Activated B cell treated with CpG ODN at 0.5 μM for 24 hours (primary cell): ENCODE measurements at regions of chr5 and their contacts with region 1.

Region 1: GRCh38 chr5:97547999-97548738 is 365.1 kb upstream of the RIOK2 start:
- DNase-seq: no peak
- ATAC-seq: peak; percentile 25
- H3K4me3 Mint-ChIP-seq: no peak overlapping the region
- H3K27ac Mint-ChIP-seq: no peak overlapping the region
- H3K4me1 Mint-ChIP-seq: peaks cover 5% of the 10 kb centered on the region
- H3K27me3 Mint-ChIP-seq: no peaks in the 10 kb centered on the region
- CTCF ChIP-seq: no peak

Region 2: GRCh38 chr5:97452646-97453045 is 95.5 kb before region 1 on chr5:
- CTCF ChIA-PET with region 1: no interaction called
- POLR2A ChIA-PET with region 1: no interaction called
- intact Hi-C with region 1: no loop called
- DNase-seq: no peak
- ATAC-seq: no peak
- H3K4me3 Mint-ChIP-seq: no peak overlapping the region
- H3K27ac Mint-ChIP-seq: no peak overlapping the region
- H3K4me1 Mint-ChIP-seq: no peaks in the 10 kb centered on the region
- H3K27me3 Mint-ChIP-seq: no peaks in the 10 kb centered on the region
- CTCF ChIP-seq: no peak

Region 3: GRCh38 chr5:98796197-98796972 is 1248.2 kb after region 1 on chr5:
- CTCF ChIA-PET with region 1: no interaction called
- POLR2A ChIA-PET with region 1: no interaction called
- intact Hi-C with region 1: loop called (anchors 10 kb)
- DNase-seq: no peak
- ATAC-seq: peak; percentile 75
- H3K4me3 Mint-ChIP-seq: no peak overlapping the region
- H3K27ac Mint-ChIP-seq: no peak overlapping the region
- H3K4me1 Mint-ChIP-seq: peaks cover 8% of the 10 kb centered on the region
- H3K27me3 Mint-ChIP-seq: no peaks in the 10 kb centered on the region
- CTCF ChIP-seq: peak; percentile 26

Region 4: DNA sequence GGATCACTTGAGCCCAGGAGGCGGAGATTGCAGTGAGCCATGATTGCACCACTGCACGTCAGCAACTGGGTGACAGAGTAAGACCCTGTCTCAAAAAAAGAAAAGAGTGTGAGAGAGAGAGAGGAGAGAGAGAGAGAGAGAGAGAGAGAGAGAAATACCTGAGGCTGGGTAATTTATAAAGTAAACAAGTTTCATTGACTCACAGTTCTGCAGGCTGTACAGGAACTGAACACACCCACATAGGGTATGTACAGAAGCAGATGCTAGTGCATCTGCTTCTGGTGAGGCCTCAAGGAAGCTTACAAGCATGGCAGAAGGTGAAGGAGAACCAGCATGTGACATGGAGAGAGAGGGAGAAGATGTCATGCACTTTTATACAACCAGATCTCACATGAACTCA is 1427.1 kb after region 1 on chr5:
- CTCF ChIA-PET with region 1: no interaction called
- POLR2A ChIA-PET with region 1: no interaction called
- intact Hi-C with region 1: no loop called
- DNase-seq: no peak
- ATAC-seq: no peak
- H3K4me3 Mint-ChIP-seq: no peak overlapping the region
- H3K27ac Mint-ChIP-seq: peak overlapping the region; percentile 32
- H3K4me1 Mint-ChIP-seq: peaks cover 25% of the 10 kb centered on the region
- H3K27me3 Mint-ChIP-seq: no peaks in the 10 kb centered on the region
- CTCF ChIP-seq: no peak